Heart right ventricle (tissue), 16 donors: ENCODE measurements at regions of chr3 and their contacts with region 1.

Region 1: DNA sequence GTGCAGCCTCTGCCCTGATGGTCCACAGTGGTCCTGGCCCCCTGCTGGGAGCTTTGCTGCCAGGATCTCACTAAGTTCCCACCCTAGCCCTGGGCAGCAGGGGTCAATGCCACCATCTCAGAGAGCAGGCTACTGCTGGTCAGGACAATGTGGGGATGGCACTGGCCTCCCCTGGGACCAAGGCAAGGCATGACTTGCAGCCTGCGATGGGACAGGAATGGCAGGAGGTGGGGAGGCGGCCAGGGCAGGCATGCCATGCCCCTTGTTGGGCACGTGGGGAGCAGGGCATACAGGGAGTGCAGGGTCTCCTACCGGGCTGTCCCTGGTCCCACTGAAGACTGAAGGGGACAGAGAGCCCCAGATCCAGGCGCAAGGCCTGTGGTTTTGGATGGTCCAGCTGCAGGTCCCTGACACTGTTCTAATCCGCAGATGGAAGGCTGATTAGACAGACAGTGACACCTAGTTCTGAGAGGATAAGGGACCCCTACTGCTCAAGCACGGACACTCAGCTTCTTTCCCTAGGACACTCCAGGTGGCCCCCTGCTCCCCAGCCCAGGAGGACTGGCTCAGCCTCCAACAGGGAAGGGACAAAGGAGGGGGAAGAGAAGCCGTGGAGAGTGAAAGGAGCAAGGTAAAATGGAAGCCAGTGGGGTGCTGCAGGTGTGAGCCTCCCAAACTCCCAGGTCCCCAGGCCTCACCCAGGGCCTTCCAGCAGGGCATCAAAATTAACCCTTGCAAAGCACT is 69.2 kb upstream of the RPL32 start:
- DNase-seq: no peak
- ATAC-seq: no peak
- H3K4me3 ChIP-seq: no peak overlapping the region
- H3K27ac ChIP-seq: no peak overlapping the region
- H3K4me1 ChIP-seq: peaks cover 0 to 33% (median 21%) of the 10 kb centered on the region in 9 donors
- H3K27me3 ChIP-seq: no peaks in the 10 kb centered on the region
- CTCF ChIP-seq: no peak

Region 2: DNA sequence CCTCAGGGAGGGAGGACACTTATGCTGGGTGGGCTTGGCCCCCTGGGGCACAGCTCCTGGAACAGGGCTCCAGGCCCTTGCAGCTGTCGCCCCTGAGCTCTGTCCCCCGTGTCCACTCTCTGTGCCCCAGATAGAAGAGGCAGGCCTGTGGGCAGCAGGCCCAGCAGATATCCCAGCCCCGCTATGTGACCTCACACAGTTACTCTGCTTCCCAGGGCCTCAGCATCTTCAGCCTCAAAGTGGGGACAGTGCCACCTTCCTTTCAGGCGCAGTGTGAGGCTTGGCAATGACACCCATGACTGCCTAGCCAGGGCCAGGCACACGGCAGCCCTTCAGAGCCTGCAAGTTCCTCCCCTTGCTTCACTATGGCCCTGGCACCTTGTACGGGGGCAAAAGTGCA is 64.3 kb after region 1 on chr3:
- intact Hi-C with region 1: loop called in 2 of 10 experiments (anchors 5 kb)
- DNase-seq: no peak
- ATAC-seq: peak; percentile 36 to 80 (median 64)
- H3K4me3 ChIP-seq: no peak overlapping the region
- H3K27ac ChIP-seq: peak overlapping the region in 1 of 10 donors; percentile 26
- H3K4me1 ChIP-seq: peaks cover 0 to 46% (median 26%) of the 10 kb centered on the region in 9 donors
- H3K27me3 ChIP-seq: no peaks in the 10 kb centered on the region
- CTCF ChIP-seq: peak in 3 of 9 donors; percentile 15 to 25 (median 16)

Region 3: DNA sequence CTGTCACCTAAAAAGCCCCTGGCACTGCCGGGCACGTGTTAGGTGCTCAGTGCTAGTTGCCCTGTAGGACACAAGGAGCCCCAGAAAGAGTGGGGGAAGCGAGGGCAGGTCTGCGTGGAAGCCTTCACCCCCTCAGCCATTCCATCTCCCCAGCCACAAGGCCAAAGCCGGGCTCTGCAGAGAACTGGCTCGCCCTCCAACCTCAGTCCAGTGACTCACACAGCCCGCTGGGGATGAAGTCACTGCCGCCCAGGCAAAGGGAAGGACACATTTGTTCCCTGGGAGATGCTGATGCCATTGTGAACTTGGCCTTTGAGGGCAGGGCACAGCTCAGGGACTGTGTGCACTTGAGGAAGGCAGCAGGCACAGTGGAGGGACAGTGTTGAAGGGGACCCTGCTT is 114.6 kb after region 1 on chr3:
- intact Hi-C with region 1: no loop called
- DNase-seq: peak in 1 of 2 donors; percentile 56
- ATAC-seq: peak in 3 of 8 donors; percentile 22 to 57 (median 27)
- H3K4me3 ChIP-seq: no peak overlapping the region
- H3K27ac ChIP-seq: no peak overlapping the region
- H3K4me1 ChIP-seq: peaks cover 11 to 57% (median 38%) of the 10 kb centered on the region in 9 donors
- H3K27me3 ChIP-seq: no peaks in the 10 kb centered on the region
- CTCF ChIP-seq: no peak

Region 4: DNA sequence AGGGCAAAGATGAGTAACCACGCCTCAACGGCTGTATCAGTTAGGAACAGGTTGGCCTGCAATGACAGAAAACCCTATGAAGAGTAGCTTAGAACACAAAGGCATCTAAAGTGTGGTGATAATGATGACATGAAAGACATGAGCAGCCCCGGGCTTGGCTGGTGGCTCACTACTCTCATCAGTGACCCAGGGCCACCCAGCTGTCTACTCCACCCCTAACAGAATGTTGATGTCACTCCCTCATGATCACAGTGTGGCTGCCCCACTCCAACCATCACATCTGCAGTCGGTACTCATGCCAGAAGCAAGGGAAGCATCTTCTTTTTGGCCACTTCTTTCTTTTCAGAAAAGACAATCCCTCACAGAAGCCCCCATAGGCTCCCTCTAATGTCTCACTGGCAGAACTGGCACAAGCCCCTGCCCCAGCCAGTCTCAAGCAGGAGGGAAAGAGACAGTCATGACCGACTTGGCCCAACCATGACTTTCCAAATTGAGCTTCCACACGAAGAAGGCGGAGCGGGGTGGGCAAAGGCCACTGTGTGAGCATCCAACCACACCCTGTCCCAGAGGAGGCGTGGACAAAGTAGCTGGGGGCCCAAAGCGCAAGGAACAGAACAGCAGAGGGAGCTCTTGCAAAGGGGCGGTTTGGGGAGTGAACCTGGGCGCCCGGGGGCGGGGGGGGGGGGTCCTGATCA is 234.8 kb after region 1 on chr3:
- intact Hi-C with region 1: no loop called
- DNase-seq: no peak
- ATAC-seq: no peak
- H3K4me3 ChIP-seq: no peak overlapping the region
- H3K27ac ChIP-seq: no peak overlapping the region
- H3K4me1 ChIP-seq: no peaks in the 10 kb centered on the region
- H3K27me3 ChIP-seq: peaks cover 0 to 24% (median 0%) of the 10 kb centered on the region in 7 donors
- CTCF ChIP-seq: no peak